ENCODE measurements at regions of chr2 and their contacts with region 1.

Region 1: GRCh38 chr2:224650815-224651439 is 65.2 kb downstream of the CCDC195 start:
- DNase-seq: no peak
- ATAC-seq: peak in 2 of 4 donors; percentile 52 to 73
- H3K4me3 ChIP-seq: no peak overlapping the region
- H3K27ac ChIP-seq: no peak overlapping the region
- H3K4me1 ChIP-seq: peaks cover 0 to 3% (median 0%) of the 10 kb centered on the region in 12 donors
- H3K27me3 ChIP-seq: peaks cover 0 to 8% (median 0%) of the 10 kb centered on the region in 9 donors
- CTCF ChIP-seq: peak; percentile 67 to 83 (median 77)
- POLR2A ChIP-seq: no peak

Region 2: DNA sequence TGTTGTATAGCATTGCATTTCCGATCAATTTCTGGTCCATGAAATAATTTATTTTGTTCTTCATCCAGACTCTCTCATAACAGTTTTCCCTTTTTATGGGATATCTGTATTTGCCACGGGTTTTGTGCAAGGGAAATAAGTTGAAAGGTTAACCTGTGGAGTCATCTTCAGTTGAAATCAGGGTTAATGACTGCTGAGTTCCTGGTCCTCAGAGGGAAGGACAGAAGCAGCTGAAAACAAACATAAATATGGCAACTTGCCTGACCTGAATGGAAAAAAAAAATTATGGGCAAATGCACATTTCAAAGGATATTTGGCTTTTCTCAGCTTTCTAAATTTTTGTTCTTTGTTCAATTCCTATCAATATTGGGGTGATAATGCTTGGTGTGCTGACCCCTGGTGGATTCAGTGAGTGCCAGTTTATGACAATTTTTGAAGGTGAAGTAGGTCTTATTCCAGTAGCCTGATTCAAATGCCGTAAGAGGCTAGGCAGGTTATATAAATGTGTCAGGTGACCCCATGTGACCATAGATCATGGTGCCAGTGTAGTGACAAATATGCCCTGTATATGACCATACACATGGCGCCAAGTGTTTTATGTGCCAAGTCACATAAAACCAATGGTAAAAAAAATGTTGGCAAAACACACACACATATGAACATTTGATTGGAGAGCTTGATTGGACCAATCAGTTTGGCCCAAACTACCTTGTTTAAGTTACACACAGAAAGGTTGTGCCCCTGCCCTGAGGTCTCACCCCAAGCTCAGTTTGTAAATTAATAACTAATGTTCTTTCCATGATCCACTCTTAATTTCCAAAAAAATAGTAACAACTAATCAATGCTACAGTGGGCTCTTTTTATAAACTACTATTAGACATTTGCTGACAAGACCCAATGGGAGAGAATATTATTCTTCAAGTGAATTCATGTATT is 201.4 kb before region 1 on chr2:
- intact Hi-C with region 1: loop called in 7 of 10 experiments (anchors 5 to 10 kb)
- DNase-seq: no peak
- ATAC-seq: no peak
- H3K4me3 ChIP-seq: no peak overlapping the region
- H3K27ac ChIP-seq: no peak overlapping the region
- H3K4me1 ChIP-seq: no peaks in the 10 kb centered on the region
- H3K27me3 ChIP-seq: no peaks in the 10 kb centered on the region
- CTCF ChIP-seq: peak; percentile 34 to 69 (median 54)
- POLR2A ChIP-seq: no peak

Region 3: DNA sequence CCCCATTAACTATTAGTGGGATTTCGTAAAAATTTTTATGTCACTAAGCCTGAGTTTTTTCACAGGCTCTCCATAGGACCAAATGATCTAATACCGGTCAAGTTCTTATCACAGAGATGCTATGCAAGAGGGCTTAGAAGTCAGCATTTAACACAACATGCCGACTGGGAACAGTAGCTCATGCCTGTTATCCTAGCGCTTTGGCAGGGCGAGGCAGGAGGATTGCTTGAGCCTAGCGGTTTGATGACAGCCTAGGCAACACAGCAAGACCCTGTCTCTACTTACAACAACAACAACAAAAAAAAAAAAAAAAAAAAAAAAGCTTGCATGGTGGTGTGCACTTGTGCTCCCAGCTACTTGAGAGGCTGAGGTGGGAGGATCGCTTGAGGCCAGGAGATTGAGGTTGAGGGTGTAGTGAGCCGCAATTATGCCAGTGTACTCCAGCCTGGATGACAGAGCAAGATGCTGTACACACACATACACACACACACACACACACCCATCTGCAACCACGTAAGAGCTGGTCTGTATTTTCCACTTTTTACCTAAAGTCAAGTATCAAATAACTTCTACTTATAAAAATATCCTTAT is 181.5 kb before region 1 on chr2:
- intact Hi-C with region 1: loop called in 1 of 10 experiments (anchors 10 kb)
- DNase-seq: no peak
- ATAC-seq: peak in 1 of 4 donors; percentile 16
- H3K4me3 ChIP-seq: no peak overlapping the region
- H3K27ac ChIP-seq: no peak overlapping the region
- H3K4me1 ChIP-seq: no peaks in the 10 kb centered on the region
- H3K27me3 ChIP-seq: no peaks in the 10 kb centered on the region
- CTCF ChIP-seq: no peak
- POLR2A ChIP-seq: no peak

Region 4: GRCh38 chr2:224778474-224778877 is 127.5 kb after region 1 on chr2:
- intact Hi-C with region 1: loop called in 1 of 10 experiments (anchors 10 kb)
- DNase-seq: peak in 1 of 5 donors; percentile 15
- ATAC-seq: peak in 1 of 4 donors; percentile 52
- H3K4me3 ChIP-seq: no peak overlapping the region
- H3K27ac ChIP-seq: no peak overlapping the region
- H3K4me1 ChIP-seq: no peaks in the 10 kb centered on the region
- H3K27me3 ChIP-seq: no peaks in the 10 kb centered on the region
- CTCF ChIP-seq: peak; percentile 66 to 84 (median 76)
- POLR2A ChIP-seq: no peak

Measured in heart left ventricle (tissue), 16 donors.